Dendritic cell treated with granulocyte-macrophage colony-stimulating factor and Interleukin-4, amounts not matched to agents 40 ng/mL and 50 ng/mL, for 4 days (primary cell): ENCODE measurements at regions of chrX and their contacts with region 1.

Region 1: DNA sequence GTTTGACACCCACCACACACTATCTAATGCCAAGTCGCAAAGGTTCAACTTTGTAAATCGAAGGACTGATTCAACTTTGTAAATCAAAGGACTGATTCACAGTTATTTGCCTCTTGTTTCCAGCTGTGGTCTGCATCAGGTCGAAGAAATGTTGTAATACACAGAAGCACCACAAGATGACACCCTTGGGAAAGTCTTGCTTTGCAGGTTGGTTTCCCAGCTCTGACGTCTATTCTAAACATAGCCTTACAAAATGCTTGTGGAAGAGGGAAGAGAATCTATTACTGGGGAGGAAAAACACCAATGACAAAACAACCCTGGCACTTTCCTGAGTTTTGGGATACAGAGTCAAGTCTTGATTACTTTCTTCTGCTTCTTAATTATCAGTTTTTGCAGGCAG is 35.3 kb downstream of the SUPT20HL1 start:
- H3K4me3 Mint-ChIP-seq: no peak overlapping the region
- H3K27ac Mint-ChIP-seq: no peak overlapping the region
- H3K4me1 Mint-ChIP-seq: no peaks in the 10 kb centered on the region
- H3K27me3 Mint-ChIP-seq: peaks cover 7% of the 10 kb centered on the region

Region 2: DNA sequence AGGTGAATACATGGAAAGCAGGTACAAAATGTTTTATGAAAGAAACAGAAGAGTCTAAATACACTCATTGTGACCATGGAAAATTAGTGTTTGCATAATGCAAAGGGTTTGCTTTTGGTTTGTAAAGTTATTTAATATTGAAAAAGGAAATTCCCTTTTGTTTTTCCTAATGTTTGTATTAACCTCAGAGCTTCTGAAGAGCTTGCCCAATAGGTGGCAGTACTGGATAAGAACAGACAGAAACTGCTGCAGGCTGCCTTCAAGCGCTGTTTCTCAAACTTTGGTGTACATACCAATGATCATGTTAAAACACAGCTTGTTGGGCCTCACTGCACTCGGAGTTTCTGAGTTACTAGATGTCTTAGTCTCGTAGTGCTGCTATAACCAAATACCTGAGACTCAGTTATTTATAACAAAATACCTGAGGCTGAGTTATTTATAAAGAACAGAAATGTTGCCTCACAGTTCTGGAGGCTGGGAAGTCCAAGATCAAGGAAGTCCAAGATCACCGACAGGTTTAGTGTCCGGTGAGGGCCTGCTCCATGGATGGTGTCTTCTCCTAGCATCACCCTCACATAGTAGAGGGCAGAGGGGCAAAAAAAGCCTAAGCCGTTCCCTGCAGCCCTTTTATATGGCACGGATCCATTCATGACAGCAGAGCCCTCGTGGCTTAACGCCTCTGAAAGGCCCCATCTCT is 136.1 kb before region 1 on chrX:
- intact Hi-C with region 1: loop called (anchors 5 kb)
- H3K4me3 Mint-ChIP-seq: no peak overlapping the region
- H3K27ac Mint-ChIP-seq: no peak overlapping the region
- H3K4me1 Mint-ChIP-seq: peaks cover 16% of the 10 kb centered on the region
- H3K27me3 Mint-ChIP-seq: peaks cover 4% of the 10 kb centered on the region

Region 3: DNA sequence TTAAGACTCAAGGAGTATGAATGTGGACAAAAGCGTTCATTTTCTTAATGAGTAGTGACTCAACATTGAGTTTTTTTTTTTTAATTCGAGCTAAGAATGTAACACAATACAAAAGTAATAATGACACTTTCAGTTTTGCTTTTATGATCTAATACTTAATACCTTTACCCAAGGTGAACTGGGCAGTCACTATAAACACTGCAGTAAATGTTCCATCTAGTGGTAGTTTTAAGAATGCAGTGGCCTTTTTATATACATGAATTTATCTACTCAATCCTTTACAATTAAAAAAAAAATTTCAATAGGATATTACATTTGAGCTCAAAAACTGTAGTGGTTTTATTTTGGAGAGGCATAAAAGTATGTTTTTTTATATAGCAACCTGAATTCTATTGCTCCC is 103.2 kb after region 1 on chrX:
- intact Hi-C with region 1: loop called (anchors 1 kb)
- H3K4me3 Mint-ChIP-seq: no peak overlapping the region
- H3K27ac Mint-ChIP-seq: no peak overlapping the region
- H3K4me1 Mint-ChIP-seq: peaks cover 5% of the 10 kb centered on the region
- H3K27me3 Mint-ChIP-seq: no peaks in the 10 kb centered on the region

Region 4: GRCh38 chrX:24561121-24561520 is 165.3 kb after region 1 on chrX:
- intact Hi-C with region 1: loop called (anchors 5 kb)
- H3K4me3 Mint-ChIP-seq: no peak overlapping the region
- H3K27ac Mint-ChIP-seq: no peak overlapping the region
- H3K4me1 Mint-ChIP-seq: no peaks in the 10 kb centered on the region
- H3K27me3 Mint-ChIP-seq: no peaks in the 10 kb centered on the region